ENCODE measurements at regions of chr5 and their contacts with region 1.

Region 1: DNA sequence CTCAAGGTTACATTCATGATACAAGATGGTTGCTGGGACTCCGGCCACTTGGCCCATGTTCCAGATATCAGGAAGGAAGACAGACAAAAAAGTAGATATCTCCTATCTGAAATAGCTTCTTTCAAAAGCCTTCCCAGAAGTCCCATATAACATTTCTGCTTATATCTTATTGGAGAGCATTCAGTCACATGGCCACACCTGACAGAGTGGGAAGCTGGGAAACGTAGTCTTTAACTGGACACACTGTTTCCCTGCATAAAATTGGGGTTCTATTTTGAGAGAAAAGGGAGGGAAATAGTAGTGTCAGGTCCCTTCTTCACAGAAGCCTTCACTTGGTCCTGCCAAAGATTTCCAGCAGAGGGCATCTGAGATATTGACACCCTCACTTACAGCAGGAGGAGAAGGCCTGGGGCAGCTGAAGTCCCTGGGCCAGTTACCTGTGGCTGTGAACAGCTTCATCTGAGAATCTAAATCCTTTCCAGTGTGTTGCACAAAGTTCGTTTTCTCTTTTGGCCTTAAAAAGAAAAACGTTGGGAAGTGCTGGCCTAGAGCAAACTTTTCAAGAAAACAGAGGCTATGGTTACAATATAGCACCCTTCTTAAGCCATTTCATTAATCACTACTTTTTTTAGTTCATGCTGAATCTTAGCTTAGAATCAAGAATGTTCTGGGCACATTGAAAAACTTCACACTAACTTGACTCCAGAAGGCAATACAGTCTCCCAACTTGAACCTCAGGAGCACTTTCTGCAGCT is 33.5 kb downstream of the SPEF2 start:
- DNase-seq: peak; percentile 21
- H3K4me3 ChIP-seq: no peak overlapping the region
- H3K27ac ChIP-seq: no peak overlapping the region
- H3K27me3 ChIP-seq: no peaks in the 10 kb centered on the region
- CTCF ChIP-seq: peak; percentile 73

Region 2: GRCh38 chr5:35554016-35554415 is 97.2 kb before region 1 on chr5:
- CTCF ChIA-PET with region 1: no interaction called
- POLR2A ChIA-PET with region 1: no interaction called
- DNase-seq: no peak
- H3K4me3 ChIP-seq: no peak overlapping the region
- H3K27ac ChIP-seq: no peak overlapping the region
- H3K27me3 ChIP-seq: no peaks in the 10 kb centered on the region
- CTCF ChIP-seq: no peak

Region 3: DNA sequence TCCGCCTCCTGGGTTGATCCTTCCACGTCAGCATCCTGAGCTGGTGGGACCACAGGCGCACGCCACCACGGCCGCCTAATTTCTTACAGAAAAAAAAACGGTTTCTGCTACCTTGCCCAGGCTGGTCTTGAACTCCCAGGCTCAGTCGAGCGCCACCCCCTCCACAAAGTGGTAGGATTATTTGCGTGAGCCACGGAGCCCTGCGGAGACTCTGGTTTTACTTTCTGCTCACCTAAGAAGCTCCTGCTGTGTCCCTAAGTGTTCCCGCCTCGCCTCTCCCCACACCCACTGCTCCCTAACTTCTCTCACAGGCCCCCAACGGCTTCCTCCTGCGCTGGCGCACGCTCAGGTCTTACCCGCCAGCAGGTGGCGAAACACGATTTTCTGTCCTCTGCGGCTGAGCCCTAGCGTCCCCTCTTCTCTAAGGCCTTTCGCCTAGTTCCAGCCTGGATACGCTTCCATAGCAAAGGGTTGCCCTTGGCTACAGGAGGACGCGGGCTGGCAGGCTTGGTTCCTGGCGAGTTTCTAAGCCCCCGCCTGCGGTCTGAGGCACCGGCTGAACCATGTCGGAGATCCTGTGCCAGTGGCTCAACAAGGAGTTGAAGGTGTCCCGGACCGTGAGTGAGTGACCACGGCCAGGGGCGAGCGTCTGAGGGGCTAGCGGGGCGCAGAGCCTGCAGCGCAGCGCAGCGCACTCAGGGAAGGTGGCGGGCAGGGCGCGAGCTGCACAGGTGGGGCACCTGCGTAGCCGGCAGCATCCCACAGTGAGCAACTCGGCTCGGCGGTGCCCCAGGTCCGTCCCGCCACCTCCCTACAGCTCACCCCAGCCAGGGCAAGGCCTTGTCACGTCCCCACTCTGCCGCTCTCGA is 33.5 kb before region 1 on chr5 and contains the start of gene SPEF2:
- CTCF ChIA-PET with region 1: interaction called, 16 read pairs
- POLR2A ChIA-PET with region 1: no interaction called
- DNase-seq: peak; percentile 74
- H3K4me3 ChIP-seq: peak within 1 kb of the TSS; percentile 89
- H3K27ac ChIP-seq: no peak within 1 kb of the TSS
- H3K27me3 ChIP-seq: no peaks in the 10 kb centered on the region
- CTCF ChIP-seq: peak; percentile 86
- polyA plus RNA-seq, gene SPEF2: 2.3 and 4.2 TPM in 2 replicates

Region 4: GRCh38 chr5:35640623-35641022 is 10.6 kb before region 1 on chr5:
- CTCF ChIA-PET with region 1: interaction called, 11 read pairs
- POLR2A ChIA-PET with region 1: no interaction called
- DNase-seq: no peak
- H3K4me3 ChIP-seq: no peak overlapping the region
- H3K27ac ChIP-seq: no peak overlapping the region
- H3K27me3 ChIP-seq: no peaks in the 10 kb centered on the region
- CTCF ChIP-seq: no peak

Region 5: DNA sequence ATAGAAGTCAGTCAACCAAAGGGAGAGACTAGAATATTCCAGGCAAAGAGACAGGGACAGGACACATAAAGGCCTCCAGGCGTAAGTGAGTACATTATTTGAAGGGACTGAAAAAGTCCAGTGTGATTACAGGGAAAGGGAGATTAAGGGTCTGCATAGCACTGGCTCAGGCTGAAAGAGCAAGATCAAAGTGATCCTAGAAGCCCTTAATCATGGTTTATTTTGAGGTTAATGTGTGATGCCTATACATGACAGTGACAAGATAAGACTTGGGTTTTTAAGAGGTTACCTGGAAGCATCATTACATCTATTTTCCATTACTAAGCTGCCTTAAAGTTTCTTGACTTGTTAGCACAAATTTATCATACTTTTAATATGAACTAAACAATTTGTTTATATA is 474.7 kb after region 1 on chr5:
- CTCF ChIA-PET with region 1: no interaction called
- POLR2A ChIA-PET with region 1: no interaction called
- DNase-seq: no peak
- H3K4me3 ChIP-seq: no peak overlapping the region
- H3K27ac ChIP-seq: no peak overlapping the region
- H3K27me3 ChIP-seq: no peaks in the 10 kb centered on the region
- CTCF ChIP-seq: no peak

Measured in AG04450 (cell line).